Dendritic cell treated with granulocyte-macrophage colony-stimulating factor and Interleukin-4, amounts not matched to agents 40 ng/mL and 50 ng/mL, for 4 days (primary cell): ENCODE measurements at regions of chr7 and their contacts with region 1.

Region 1: DNA sequence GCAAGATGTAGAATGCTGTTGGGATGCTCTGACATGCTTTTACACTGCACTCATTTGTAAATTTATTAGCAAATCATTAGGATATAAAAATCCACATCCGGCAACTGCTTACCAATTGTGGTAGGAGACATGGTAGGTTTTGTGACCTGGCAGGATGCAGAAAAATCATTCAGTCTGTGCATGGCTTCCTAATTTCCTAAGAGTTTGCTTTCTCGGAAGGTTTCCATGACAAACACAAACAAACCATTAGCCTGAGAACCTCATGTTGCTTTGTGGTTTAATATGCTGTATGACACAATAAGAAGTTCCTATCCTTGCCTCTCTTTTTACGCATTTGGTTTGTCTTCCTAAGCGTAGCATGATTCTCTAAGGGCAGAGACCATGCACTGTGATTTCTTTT is 14.7 kb upstream of the LMBR1 start:
- H3K4me3 Mint-ChIP-seq: no peak overlapping the region
- H3K27ac Mint-ChIP-seq: no peak overlapping the region
- H3K4me1 Mint-ChIP-seq: peaks cover 5% of the 10 kb centered on the region
- H3K27me3 Mint-ChIP-seq: peaks cover 8% of the 10 kb centered on the region

Region 2: DNA sequence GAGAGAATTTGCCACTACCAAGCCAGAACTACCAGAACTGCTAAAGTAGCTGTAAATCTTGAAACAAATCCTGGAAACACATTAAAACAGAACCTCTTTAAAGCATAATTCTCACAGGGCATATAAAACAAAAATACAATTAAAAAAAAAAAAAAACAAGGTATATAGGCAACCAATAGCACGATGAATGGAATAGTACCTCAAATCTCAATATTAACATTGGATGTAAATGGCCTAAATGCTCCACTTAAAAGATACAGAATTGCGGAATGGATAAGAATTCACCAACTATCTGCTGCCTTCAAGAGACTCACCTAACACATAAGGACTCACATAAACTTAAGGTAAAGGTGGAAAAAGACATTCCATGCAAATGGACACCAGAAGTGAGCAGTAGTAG is 31.9 kb before region 1 on chr7:
- intact Hi-C with region 1: no loop called
- H3K4me3 Mint-ChIP-seq: no peak overlapping the region
- H3K27ac Mint-ChIP-seq: no peak overlapping the region
- H3K4me1 Mint-ChIP-seq: peaks cover 14% of the 10 kb centered on the region
- H3K27me3 Mint-ChIP-seq: no peaks in the 10 kb centered on the region

Region 3: DNA sequence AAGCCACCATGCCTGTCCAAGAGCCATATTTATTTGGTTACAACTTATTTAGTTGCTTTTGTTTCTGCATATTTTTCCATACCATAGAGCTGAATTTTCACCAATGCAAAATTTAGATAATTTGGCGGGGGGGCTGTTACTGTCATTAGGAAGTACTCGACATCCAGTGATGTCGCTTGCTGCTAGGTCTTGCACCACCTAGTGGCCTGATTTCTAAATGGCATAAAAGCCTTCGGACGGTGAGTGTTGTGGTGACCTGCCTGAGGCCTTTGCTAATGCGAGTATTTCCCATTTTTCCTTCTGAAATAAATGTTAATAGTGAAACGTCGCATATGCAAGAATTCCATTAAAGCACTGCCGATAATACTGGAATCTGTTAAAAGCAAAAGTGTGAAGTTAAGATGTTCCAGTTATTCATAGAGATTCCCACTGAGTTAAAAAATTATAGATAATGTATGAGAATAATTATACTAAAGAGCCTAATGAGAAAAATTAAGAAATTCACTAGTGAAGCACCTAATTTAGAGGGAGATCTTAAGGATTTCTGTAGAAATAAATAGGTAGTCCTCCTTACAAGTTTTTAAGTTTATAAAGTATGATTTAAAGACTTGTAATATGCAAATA is 343.1 kb after region 1 on chr7:
- intact Hi-C with region 1: loop called (anchors 2 kb)
- H3K4me3 Mint-ChIP-seq: no peak overlapping the region
- H3K27ac Mint-ChIP-seq: no peak overlapping the region
- H3K4me1 Mint-ChIP-seq: no peaks in the 10 kb centered on the region
- H3K27me3 Mint-ChIP-seq: no peaks in the 10 kb centered on the region